Prostate gland (tissue), 2 donors: ENCODE measurements at regions of chr1 and their contacts with region 1.

Region 1: DNA sequence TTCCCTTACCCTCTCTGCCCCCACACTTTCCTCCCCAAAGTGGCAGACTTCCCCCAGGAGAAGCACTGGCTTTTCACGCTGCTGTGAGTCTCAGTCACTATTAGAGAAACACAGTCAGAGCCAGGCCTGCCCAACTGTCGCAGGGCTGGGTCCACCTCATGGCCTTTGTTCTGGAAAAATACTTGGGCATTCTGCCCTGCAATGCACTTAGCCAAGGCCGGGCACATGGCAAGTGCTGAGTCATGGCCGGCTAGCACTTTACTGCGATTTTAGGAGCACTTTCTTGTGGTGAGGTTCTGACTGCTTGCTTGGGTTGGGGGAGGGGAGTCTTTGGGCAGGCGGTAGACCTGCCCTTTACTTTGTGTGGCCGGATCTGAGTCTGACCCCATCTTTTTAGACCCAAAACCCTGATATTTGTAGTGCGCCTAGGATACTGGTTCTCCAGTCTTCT is 7.7 kb downstream of the EPHX1 start:
- DNase-seq: peak; percentile 86
- H3K4me3 ChIP-seq: no peak overlapping the region
- H3K27ac ChIP-seq: peak overlapping the region; percentile 66 to 82
- H3K4me1 ChIP-seq: peaks cover 14% of the 10 kb centered on the region
- H3K27me3 ChIP-seq: no peaks in the 10 kb centered on the region
- CTCF ChIP-seq: no peak
- POLR2A ChIP-seq: peak; percentile 40

Region 2: GRCh38 chr1:225834417-225835329 is 17.0 kb after region 1 on chr1:
- intact Hi-C with region 1: loop called (anchors 2 kb)
- DNase-seq: peak; percentile 83
- H3K4me3 ChIP-seq: no peak overlapping the region
- H3K27ac ChIP-seq: peak overlapping the region; percentile 62 to 71
- H3K4me1 ChIP-seq: peaks cover 7% of the 10 kb centered on the region
- H3K27me3 ChIP-seq: no peaks in the 10 kb centered on the region
- CTCF ChIP-seq: no peak
- POLR2A ChIP-seq: no peak